ENCODE measurements at regions of chr14 and their contacts with region 1.

Region 1: GRCh38 chr14:38056270-38056669 is 151.4 kb upstream of the SSTR1 start:
- DNase-seq: peak in 3 of 9 experiments; percentile 13 to 61 (median 58)
- ATAC-seq: peak; percentile 51
- H3K4me3 ChIP-seq: no peak overlapping the region
- H3K4me3 Mint-ChIP-seq: no peak overlapping the region
- H3K27ac ChIP-seq: no peak overlapping the region
- H3K27ac Mint-ChIP-seq: no peak overlapping the region
- H3K4me1 ChIP-seq: no peaks in the 10 kb centered on the region
- H3K4me1 Mint-ChIP-seq: peaks cover 7% of the 10 kb centered on the region
- H3K27me3 ChIP-seq: no peaks in the 10 kb centered on the region
- H3K27me3 Mint-ChIP-seq: no peaks in the 10 kb centered on the region
- CTCF ChIP-seq: no peak

Region 2: DNA sequence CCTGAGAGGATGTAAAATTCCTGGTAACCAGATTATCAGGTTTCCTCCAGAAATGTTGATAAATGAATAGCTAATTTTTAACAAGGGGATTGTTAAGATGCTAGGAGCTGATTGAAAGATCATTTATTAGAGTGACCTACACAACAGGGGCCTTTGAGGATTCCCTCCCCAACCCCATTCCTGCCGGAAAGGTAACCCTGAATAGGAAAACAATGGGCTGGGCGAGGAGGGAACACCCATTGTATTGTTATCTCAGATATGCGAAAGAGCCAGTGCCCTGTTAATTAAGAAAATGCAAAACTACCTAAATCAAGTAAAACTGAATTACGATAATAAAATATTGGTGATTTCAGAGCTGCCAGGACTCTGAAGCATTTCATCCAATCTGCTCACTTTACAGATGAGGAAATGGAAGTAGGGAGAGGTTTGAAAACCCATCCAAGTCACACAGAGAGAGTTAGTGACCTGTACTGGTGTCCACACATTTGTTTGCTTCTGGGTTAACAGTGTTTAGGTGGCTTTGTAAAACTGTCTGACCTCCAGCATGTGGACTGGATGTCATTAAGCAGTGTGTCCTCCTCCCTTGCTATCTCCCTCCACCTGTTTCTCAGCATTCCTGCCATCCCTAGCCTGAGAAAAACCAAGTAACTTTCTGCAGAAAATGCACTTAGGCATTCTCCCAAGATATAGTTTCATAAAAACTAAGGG is 246.0 kb before region 1 on chr14:
- CTCF ChIA-PET with region 1: no interaction called
- POLR2A ChIA-PET with region 1: no interaction called
- intact Hi-C with region 1: no loop called
- DNase-seq: no peak
- ATAC-seq: no peak
- H3K4me3 ChIP-seq: no peak overlapping the region
- H3K4me3 Mint-ChIP-seq: no peak overlapping the region
- H3K27ac ChIP-seq: no peak overlapping the region
- H3K27ac Mint-ChIP-seq: no peak overlapping the region
- H3K4me1 ChIP-seq: no peaks in the 10 kb centered on the region
- H3K4me1 Mint-ChIP-seq: no peaks in the 10 kb centered on the region
- H3K27me3 ChIP-seq: no peaks in the 10 kb centered on the region
- H3K27me3 Mint-ChIP-seq: no peaks in the 10 kb centered on the region
- CTCF ChIP-seq: no peak

Region 3: GRCh38 chr14:38197001-38197783 is 140.9 kb after region 1 on chr14:
- CTCF ChIA-PET with region 1: interaction called, 4 read pairs
- POLR2A ChIA-PET with region 1: no interaction called
- intact Hi-C with region 1: loop called (anchors 1 to 2 kb)
- DNase-seq: peak in 2 of 9 experiments; percentile 18 to 41
- ATAC-seq: no peak
- H3K4me3 ChIP-seq: no peak overlapping the region
- H3K4me3 Mint-ChIP-seq: no peak overlapping the region
- H3K27ac ChIP-seq: no peak overlapping the region
- H3K27ac Mint-ChIP-seq: no peak overlapping the region
- H3K4me1 ChIP-seq: peaks cover 4% of the 10 kb centered on the region
- H3K4me1 Mint-ChIP-seq: peaks cover 6% of the 10 kb centered on the region
- H3K27me3 ChIP-seq: no peaks in the 10 kb centered on the region
- H3K27me3 Mint-ChIP-seq: no peaks in the 10 kb centered on the region
- CTCF ChIP-seq: peak; percentile 77

Region 4: DNA sequence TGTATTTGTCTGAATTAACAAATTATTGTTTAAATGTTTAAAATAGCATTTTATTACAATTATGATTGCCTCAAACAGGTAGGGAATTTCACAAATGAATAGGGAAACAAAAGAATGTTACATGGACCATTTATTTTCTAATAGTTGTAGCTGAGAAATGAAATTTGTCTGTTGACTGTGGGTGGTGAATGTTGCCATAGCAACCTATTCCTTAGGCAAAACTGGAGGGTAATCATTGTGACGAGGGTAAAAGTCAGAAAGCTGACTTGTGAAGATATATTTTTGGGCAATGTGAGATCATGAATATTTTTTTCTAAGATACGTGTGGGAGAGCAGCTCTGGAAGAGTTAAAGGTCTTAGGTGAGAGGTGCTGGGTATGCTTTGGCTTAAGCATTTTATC is 223.8 kb after region 1 on chr14:
- CTCF ChIA-PET with region 1: no interaction called
- POLR2A ChIA-PET with region 1: no interaction called
- intact Hi-C with region 1: no loop called
- DNase-seq: no peak
- ATAC-seq: no peak
- H3K4me3 ChIP-seq: no peak overlapping the region
- H3K4me3 Mint-ChIP-seq: no peak overlapping the region
- H3K27ac ChIP-seq: no peak overlapping the region
- H3K27ac Mint-ChIP-seq: no peak overlapping the region
- H3K4me1 ChIP-seq: no peaks in the 10 kb centered on the region
- H3K4me1 Mint-ChIP-seq: no peaks in the 10 kb centered on the region
- H3K27me3 ChIP-seq: no peaks in the 10 kb centered on the region
- H3K27me3 Mint-ChIP-seq: peaks cover 16% of the 10 kb centered on the region
- CTCF ChIP-seq: no peak